Pancreas (tissue), 10 donors: ENCODE measurements at regions of chr19 and their contacts with region 1.

Region 1: GRCh38 chr19:30163363-30164062 is 208.7 kb upstream of the ZNF536 start:
- DNase-seq: peak in 1 of 6 donors; percentile 20
- ATAC-seq: no peak
- H3K4me3 ChIP-seq: no peak overlapping the region
- H3K27ac ChIP-seq: no peak overlapping the region
- H3K4me1 ChIP-seq: no peaks in the 10 kb centered on the region
- H3K27me3 ChIP-seq: no peaks in the 10 kb centered on the region
- CTCF ChIP-seq: no peak

Region 2: GRCh38 chr19:30274987-30275386 is 111.5 kb after region 1 on chr19:
- intact Hi-C with region 1: loop called in 1 of 3 experiments (anchors 10 kb)
- DNase-seq: no peak
- ATAC-seq: no peak
- H3K4me3 ChIP-seq: no peak overlapping the region
- H3K27ac ChIP-seq: no peak overlapping the region
- H3K4me1 ChIP-seq: no peaks in the 10 kb centered on the region
- H3K27me3 ChIP-seq: peaks cover 0 to 9% (median 2%) of the 10 kb centered on the region in 4 donors
- CTCF ChIP-seq: no peak

Region 3: GRCh38 chr19:30621326-30621920 is 457.9 kb after region 1 on chr19:
- intact Hi-C with region 1: no loop called
- DNase-seq: no peak
- ATAC-seq: no peak
- H3K4me3 ChIP-seq: no peak overlapping the region
- H3K27ac ChIP-seq: no peak overlapping the region
- H3K4me1 ChIP-seq: no peaks in the 10 kb centered on the region
- H3K27me3 ChIP-seq: peaks cover 0 to 15% (median 1%) of the 10 kb centered on the region in 4 donors
- CTCF ChIP-seq: no peak